MCF 10A (cell line): ENCODE measurements at regions of chr6 and their contacts with region 1.

Region 1: DNA sequence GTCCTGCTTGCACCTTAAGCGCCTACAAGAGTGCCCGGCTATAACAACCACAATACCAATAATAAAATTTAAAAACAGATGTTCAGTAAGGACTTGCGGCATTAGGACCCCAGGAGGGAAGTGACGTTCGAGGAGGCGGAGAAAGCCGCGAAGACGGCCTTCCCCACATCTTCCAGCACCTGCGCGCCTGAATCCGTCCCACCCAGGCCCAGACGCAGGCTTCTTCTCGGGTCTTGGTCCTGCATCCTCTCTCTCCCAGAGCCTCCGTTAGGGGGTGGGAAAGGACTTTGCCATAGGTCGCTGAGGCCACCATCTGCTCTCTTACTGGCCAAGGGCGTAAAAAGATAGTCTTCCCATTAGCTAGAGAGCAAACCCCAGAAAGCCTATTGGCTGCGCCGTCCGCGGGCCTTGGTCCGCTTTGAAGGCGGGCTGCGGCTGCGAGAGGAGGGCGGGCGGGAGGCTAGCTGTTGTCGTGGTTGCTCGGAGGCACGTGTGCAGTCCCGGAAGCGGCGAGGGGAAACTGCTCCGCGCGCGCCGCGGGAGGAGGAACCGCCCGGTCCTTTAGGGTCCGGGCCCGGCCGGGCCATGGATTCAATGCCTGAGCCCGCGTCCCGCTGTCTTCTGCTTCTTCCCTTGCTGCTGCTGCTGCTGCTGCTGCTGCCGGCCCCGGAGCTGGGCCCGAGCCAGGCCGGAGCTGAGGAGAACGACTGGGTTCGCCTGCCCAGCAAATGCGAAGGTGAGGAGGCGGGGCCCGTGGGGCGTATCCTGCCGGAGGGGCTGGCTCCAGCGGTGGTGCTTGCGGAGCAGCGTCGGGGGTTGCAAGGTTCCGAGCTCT is at the start of gene CNPY3:
- DNase-seq: peak; percentile 97
- H3K4me3 Mint-ChIP-seq: peak within 1 kb of the TSS; percentile 99
- H3K27ac Mint-ChIP-seq: peak within 1 kb of the TSS; percentile 97
- H3K4me1 Mint-ChIP-seq: peaks cover 40% of the 10 kb centered on the region
- H3K27me3 Mint-ChIP-seq: no peaks in the 10 kb centered on the region
- CTCF ChIP-seq: no peak
- total RNA-seq, gene CNPY3: 21.9 and 22.5 TPM in 2 replicates

Region 2: DNA sequence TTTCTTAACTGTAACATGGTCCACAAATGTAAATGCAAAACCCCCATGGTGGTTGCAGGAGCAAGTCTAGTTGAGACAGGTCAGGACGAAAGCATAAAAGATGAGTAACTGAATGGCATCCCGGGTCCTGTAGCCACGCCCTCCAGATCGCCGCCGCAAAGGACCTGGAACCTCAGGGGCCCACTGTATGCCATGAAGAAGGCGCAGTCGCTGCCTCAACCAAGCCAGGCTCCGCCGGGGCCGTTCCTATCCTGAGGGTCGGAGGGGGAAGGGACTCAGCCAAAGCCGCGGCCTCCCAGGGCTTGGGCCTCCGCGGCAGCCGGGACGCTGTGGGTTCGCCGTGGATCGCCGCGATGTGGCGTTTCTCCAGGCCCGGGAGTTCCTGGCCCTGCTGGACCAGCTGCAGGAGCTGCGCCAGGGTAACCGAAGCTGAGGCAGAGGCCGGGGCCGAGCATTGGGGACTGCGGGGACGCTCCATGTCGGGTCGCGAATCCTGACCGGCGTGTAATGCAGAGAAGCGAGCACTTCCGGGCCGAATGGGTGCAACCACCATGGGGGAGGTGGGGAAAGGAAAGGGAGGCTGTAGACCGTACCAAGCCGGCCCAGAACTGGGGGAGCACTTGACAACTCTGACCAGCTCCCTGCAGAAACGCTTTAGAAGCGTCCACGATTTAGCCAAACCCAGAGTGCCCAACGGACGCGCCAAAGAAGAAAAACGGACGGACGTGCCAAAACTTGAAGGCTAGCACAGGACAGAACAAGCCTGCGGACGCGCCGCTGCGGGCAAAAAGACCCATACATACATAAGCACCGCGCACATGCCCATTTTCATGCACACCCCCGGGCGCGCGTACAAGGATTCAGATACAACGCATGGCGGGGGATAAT is 38.6 kb before region 1 on chr6:
- CTCF ChIA-PET with region 1: no interaction called
- POLR2A ChIA-PET with region 1: interaction called, 16 read pairs
- intact Hi-C with region 1: no loop called
- DNase-seq: peak; percentile 98
- H3K4me3 Mint-ChIP-seq: peak overlapping the region; percentile 89
- H3K27ac Mint-ChIP-seq: peak overlapping the region; percentile 80
- H3K4me1 Mint-ChIP-seq: no peaks in the 10 kb centered on the region
- H3K27me3 Mint-ChIP-seq: no peaks in the 10 kb centered on the region
- CTCF ChIP-seq: no peak

Region 3: DNA sequence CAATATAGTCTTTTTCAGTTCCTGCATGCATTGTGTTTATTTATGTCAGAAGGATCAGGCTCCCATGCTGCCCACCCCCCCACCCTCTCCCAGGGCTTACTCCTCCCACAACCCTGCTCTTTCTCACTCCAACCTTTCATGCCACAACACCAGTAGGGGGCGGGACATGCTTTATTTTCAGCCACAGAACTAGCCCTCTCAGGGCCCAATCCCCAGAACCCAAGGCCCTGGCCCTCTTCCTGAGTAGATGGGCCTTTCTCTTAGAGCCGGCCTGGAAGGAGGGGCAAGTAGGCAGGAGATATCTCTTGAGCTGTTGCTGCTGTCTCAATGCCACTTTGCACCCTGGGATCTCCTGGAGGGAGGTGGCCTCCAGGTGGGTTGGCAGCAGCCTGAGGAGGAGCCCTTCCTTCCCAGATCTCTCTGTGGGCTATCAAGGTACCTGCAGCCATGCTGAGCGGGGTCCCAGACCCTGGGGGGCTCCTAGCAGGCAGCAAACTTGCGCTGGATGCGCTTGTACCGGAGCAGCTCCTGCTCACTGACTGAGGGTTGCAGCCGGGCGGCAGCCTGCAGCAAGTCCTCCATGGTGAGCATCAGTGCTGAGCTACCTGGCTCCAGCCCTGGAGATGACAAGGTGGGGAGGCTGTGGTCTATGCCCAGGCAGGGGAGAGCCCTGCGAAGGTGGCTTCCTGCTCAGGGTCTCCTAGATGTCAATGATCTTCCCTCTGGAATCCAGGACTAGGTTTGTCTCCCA is 34.8 kb after region 1 on chr6:
- CTCF ChIA-PET with region 1: no interaction called
- POLR2A ChIA-PET with region 1: interaction called, 17 read pairs
- intact Hi-C with region 1: loop called (anchors 5 kb)
- DNase-seq: peak; percentile 61
- H3K4me3 Mint-ChIP-seq: no peak overlapping the region
- H3K27ac Mint-ChIP-seq: no peak overlapping the region
- H3K4me1 Mint-ChIP-seq: peaks cover 7% of the 10 kb centered on the region
- H3K27me3 Mint-ChIP-seq: no peaks in the 10 kb centered on the region
- CTCF ChIP-seq: no peak

Region 4: GRCh38 chr6:42978839-42979522 is 49.8 kb after region 1 on chr6 and contains the start of gene PEX6:
- CTCF ChIA-PET with region 1: interaction called, 6 read pairs
- POLR2A ChIA-PET with region 1: interaction called, 69 read pairs
- intact Hi-C with region 1: loop called (anchors 2 kb)
- DNase-seq: peak; percentile 91
- H3K4me3 Mint-ChIP-seq: peak within 1 kb of the TSS; percentile 87
- H3K27ac Mint-ChIP-seq: peak within 1 kb of the TSS; percentile 91
- H3K4me1 Mint-ChIP-seq: peaks cover 15% of the 10 kb centered on the region
- H3K27me3 Mint-ChIP-seq: no peaks in the 10 kb centered on the region
- CTCF ChIP-seq: no peak
- total RNA-seq, gene PEX6: 25.8 and 34.0 TPM in 2 replicates

Region 5: DNA sequence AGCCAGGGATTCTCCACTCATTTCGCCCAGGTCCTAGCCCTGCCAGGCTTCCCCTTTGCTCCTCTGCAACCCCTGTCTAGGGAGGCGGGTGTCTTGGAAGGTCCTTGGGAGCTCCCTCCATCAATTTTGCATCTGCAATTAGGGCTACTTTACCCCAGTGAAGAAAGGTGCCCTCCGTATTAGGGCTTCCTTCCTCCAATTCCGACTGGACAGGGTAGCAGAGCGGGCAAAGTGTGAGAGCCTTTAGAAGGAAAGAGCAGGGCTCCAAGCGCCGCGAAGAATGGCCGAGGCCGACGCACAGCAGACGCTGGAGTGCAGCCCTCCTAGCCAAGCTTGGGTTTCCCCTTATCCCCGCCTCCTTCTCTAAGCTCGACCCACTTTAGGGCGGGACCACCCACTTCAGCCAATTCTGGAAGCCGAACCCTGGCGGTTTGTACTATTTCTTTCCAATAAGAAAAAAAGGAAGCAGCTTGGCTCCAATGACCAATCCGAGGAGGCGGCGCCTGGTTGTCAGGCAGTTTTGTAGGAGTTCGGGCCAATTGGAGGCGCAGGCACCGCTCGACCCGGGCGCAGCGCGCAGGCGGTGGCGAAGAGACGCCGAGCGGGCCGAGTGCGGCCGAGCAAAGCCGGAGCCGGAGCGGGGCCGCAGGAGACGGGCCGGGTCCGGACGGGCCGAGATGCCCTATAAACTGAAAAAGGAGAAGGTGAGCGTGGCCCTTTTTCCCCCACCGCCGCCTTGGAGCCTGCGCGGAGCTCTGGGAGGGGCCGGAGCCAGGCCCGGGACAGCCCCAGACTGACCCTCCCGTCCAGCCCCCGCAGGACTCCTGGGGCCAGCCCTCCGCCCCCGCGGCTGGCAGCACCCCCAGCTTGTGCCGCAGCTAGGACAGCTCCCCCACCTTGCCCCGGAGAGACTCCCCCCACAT is 55.1 kb after region 1 on chr6 and contains the start of gene PPP2R5D:
- CTCF ChIA-PET with region 1: interaction called, 6 read pairs
- POLR2A ChIA-PET with region 1: interaction called, 69 read pairs
- intact Hi-C with region 1: loop called (anchors 2 kb)
- DNase-seq: peak; percentile 99
- H3K4me3 Mint-ChIP-seq: peak within 1 kb of the TSS; percentile 78
- H3K27ac Mint-ChIP-seq: peak within 1 kb of the TSS; percentile 90
- H3K4me1 Mint-ChIP-seq: peaks cover 39% of the 10 kb centered on the region
- H3K27me3 Mint-ChIP-seq: no peaks in the 10 kb centered on the region
- CTCF ChIP-seq: no peak
- total RNA-seq, gene PPP2R5D: 16.5 and 17.9 TPM in 2 replicates

Region 6: DNA sequence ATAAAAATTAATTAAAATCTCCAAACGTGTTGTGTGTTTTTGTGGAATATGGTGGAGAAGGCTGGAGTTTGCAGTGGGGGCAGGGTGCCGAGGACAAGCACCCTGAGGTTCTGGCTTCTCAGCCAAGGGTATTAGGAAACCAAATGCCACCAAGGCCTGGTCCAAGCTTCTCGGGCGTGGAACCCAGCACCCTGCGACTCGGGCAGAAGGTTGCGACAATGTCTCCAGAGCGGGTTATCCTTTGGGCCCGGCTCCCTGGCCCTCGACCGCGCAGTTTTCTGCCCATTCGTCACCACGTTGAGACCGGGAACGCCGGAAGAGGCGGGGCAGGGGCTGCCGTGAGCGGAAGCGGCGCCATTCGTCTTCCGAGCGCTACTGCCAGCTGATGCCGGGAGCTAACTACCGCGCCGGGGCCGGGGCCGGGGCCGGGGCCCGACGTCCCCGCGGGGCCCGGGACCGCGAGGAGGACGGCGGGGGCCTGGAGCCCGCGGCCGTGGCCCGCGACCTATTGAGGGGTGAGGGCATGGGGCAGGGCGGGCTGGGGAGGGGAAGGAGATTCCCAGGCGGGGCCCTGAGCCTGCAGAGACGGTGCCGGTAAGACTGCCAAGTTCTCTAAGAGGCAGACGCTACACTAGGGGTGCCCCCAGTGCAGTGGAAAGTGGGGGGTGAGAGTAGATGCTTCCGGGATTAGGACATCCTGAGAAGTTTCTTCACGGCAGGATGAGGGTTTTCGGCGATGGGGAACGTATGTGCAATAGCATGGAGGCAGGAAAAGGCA is 92.3 kb after region 1 on chr6 and contains the start of gene RRP36:
- CTCF ChIA-PET with region 1: no interaction called
- POLR2A ChIA-PET with region 1: interaction called, 12 read pairs
- intact Hi-C with region 1: no loop called
- DNase-seq: peak; percentile 68
- H3K4me3 Mint-ChIP-seq: peak within 1 kb of the TSS; percentile 92
- H3K27ac Mint-ChIP-seq: peak within 1 kb of the TSS; percentile 57
- H3K4me1 Mint-ChIP-seq: peaks cover 9% of the 10 kb centered on the region
- H3K27me3 Mint-ChIP-seq: no peaks in the 10 kb centered on the region
- CTCF ChIP-seq: no peak
- total RNA-seq, gene RRP36: 72.8 and 80.4 TPM in 2 replicates